ENCODE measurements at regions of chr1 and their contacts with region 1.

Region 1: GRCh38 chr1:185670187-185670627 is 64.0 kb upstream of the HMCN1 start:
- DNase-seq: peak; percentile 69
- H3K4me3 Mint-ChIP-seq: no peak overlapping the region
- H3K27ac Mint-ChIP-seq: no peak overlapping the region
- H3K4me1 Mint-ChIP-seq: peaks cover 14% of the 10 kb centered on the region
- H3K27me3 Mint-ChIP-seq: no peaks in the 10 kb centered on the region

Region 2: GRCh38 chr1:185170291-185170848 is 499.8 kb before region 1 on chr1:
- CTCF ChIA-PET with region 1: interaction called, 3 read pairs
- intact Hi-C with region 1: loop called (anchors 1 kb)
- DNase-seq: peak; percentile 60
- H3K4me3 Mint-ChIP-seq: no peak overlapping the region
- H3K27ac Mint-ChIP-seq: peak overlapping the region; percentile 46
- H3K4me1 Mint-ChIP-seq: peaks cover 3% of the 10 kb centered on the region
- H3K27me3 Mint-ChIP-seq: no peaks in the 10 kb centered on the region

Region 3: DNA sequence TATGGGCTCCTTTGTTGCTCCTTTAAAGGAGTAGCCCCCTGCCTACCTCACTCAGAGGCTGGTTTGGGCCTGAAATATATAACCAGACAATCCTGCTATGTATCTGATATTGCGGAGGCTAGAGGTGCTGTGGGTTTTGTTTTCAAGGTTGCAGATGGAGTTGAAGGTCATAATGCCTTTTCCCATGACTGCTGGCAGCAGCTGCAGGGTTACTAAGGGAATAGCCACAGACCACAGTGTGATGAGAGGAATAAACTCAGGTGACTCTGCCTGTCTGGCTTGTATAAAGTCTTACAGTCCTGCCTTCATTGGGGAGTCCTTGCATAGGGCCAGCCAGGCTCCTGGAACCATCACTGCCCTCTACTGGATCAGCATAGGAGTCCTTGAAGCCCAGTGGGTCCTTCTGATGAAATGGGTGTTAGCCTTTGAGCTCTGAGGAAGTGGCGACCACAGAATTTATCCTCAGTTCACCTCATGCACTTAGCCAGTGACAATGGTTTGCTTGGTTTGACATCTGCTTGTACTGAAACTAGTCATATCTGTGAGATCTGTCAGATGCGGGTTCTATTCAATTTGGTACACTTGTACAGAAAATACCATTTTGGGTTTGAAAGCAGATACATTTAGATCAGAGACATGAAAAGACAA is 110.4 kb before region 1 on chr1:
- CTCF ChIA-PET with region 1: interaction called, 3 read pairs
- intact Hi-C with region 1: loop called (anchors 10 kb)
- DNase-seq: peak; percentile 58
- H3K4me3 Mint-ChIP-seq: no peak overlapping the region
- H3K27ac Mint-ChIP-seq: no peak overlapping the region
- H3K4me1 Mint-ChIP-seq: peaks cover 43% of the 10 kb centered on the region
- H3K27me3 Mint-ChIP-seq: no peaks in the 10 kb centered on the region

Region 4: GRCh38 chr1:185694081-185694480 is 23.9 kb after region 1 on chr1:
- CTCF ChIA-PET with region 1: interaction called, 5 read pairs
- intact Hi-C with region 1: loop called (anchors 1 kb)
- DNase-seq: peak; percentile 45
- H3K4me3 Mint-ChIP-seq: peak overlapping the region; percentile 65
- H3K27ac Mint-ChIP-seq: peak overlapping the region; percentile 22
- H3K4me1 Mint-ChIP-seq: peaks cover 12% of the 10 kb centered on the region
- H3K27me3 Mint-ChIP-seq: no peaks in the 10 kb centered on the region